ENCODE measurements at regions of chr2 and their contacts with region 1.

Region 1: DNA sequence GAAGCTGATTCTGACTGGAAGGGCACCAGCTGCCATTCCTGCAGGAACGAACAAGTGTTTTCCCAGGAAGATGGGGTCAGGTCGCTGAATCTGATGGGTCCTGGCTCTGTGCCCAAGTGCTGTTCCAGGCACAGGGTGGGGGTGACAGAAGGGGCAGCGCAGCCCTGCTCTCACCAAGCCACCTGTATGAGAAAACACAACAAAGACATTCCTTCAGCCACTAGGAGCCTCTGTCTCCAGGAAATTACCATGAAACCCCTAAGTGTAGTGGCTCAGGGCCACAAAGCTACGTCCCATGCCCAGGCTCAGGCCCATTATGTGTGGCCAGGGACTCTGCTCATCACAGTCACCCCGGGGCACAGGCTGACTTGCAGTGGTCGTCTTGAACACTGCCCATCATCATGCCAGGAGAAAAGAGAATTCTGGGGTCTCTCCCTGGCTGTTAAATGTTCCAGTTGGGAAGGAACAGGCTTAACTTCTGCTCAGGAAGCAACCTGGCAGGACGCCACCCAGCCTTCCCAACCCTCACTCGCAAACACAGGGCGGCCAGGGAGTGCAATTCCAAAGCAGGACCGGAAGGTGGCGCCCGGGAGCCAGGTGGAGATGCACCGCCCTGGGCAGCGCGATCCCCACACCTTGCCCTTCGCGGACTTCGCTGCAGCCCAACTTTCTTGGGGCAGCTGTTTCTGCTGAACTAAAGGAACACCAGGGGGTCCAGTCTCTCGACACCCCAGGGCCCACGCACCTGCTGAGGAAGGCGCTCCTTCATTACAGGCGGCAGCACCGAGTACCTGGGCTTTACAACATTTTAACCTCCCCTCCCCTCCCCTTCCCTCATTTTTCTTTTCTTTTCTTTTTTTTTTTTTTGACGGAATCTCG is 11.0 kb upstream of the SFTPB start:
- DNase-seq: peak; percentile 80 to 94
- ATAC-seq: peak; percentile 81 to 97
- H3K4me3 ChIP-seq: no peak overlapping the region
- H3K27ac ChIP-seq: peak overlapping the region; percentile 70 to 73
- H3K4me1 ChIP-seq: peaks cover 26% of the 10 kb centered on the region
- CTCF ChIP-seq: peak; percentile 94
- EP300 ChIP-seq: no peak
- POLR2A ChIP-seq: no peak
- RAD21 ChIP-seq: peak; percentile 91 to 97

Region 2: GRCh38 chr2:85175369-85176299 is 503.4 kb before region 1 on chr2:
- CTCF ChIA-PET with region 1: no interaction called
- POLR2A ChIA-PET with region 1: no interaction called
- DNase-seq: no peak
- ATAC-seq: no peak
- H3K4me3 ChIP-seq: no peak overlapping the region
- H3K27ac ChIP-seq: no peak overlapping the region
- H3K4me1 ChIP-seq: no peaks in the 10 kb centered on the region
- CTCF ChIP-seq: no peak
- EP300 ChIP-seq: no peak
- POLR2A ChIP-seq: no peak
- RAD21 ChIP-seq: no peak

Region 3: DNA sequence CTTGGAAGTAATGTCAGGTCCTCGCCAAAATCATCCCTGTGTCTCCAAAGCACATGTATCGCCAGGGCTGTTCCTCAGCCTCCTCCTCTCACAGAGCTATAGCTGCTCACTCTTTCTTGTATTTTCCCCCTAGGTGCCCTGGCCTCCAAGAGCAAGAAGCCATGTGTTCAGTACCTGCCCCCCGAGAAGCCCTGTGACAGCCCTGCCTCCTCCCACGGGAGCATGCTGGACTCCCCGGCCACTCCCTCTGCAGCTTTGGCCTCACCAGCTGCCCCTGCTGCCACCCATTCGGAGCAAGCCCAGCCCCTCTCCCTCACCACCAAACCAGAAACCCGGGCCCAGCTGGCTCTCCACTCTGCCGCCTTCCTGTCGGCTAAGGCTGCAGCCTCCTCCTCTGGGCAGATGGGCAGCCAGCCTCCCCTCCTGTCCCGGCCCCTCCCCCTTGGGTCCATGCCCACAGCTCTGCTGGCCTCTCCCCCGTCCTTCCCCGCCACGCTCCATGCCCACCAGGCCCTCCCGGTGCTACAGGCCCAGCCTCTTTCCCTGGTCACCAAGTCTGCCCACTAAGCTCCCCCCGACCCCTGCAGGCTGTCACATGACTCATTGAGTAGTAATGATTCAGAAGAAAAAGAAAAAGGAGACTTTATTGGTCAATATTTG is 370.0 kb before region 1 on chr2:
- CTCF ChIA-PET with region 1: no interaction called
- POLR2A ChIA-PET with region 1: no interaction called
- DNase-seq: no peak
- ATAC-seq: peak; percentile 21 to 35; a peak in 4 of 6 replicates
- H3K4me3 ChIP-seq: no peak overlapping the region
- H3K27ac ChIP-seq: peak overlapping the region in 1 of 2 experiments; percentile 2; a peak in 1 of 6 replicates
- H3K4me1 ChIP-seq: peaks cover 5% of the 10 kb centered on the region; the same call in 1 of the 3 replicates
- CTCF ChIP-seq: no peak
- EP300 ChIP-seq: no peak
- POLR2A ChIP-seq: no peak
- RAD21 ChIP-seq: no peak

Region 4: DNA sequence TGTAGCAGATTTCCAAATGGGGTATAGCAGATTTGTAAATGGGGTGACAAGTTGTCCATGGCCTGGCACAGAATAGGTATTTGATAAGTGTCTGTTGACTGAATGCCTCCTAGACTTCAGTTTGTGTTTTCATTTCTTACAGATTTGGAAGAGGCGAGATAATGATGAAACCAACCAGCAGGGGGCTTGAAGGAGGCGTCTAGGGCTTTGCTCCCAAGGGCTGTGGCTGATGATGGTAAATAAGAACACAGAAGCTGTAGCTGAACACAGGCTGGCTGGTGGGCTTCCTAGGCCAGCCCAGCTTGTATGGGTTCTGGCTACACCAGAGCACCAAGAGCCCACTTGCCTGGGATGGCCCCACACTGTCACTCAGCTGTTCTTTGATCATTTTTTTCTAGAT is 30.4 kb before region 1 on chr2:
- CTCF ChIA-PET with region 1: interaction called, 37 read pairs
- POLR2A ChIA-PET with region 1: no interaction called
- DNase-seq: peak; percentile 72 to 76
- ATAC-seq: peak; percentile 72 to 84
- H3K4me3 ChIP-seq: no peak overlapping the region
- H3K27ac ChIP-seq: peak overlapping the region; percentile 80 to 91
- H3K4me1 ChIP-seq: peaks cover 59% of the 10 kb centered on the region
- CTCF ChIP-seq: peak; percentile 71
- EP300 ChIP-seq: no peak
- POLR2A ChIP-seq: no peak
- RAD21 ChIP-seq: peak; percentile 63 to 67

Region 5: GRCh38 chr2:85694052-85695025 is 15.3 kb after region 1 on chr2 and contains the start of gene GNLY:
- CTCF ChIA-PET with region 1: interaction called, 48 read pairs
- POLR2A ChIA-PET with region 1: no interaction called
- DNase-seq: no peak
- ATAC-seq: no peak; a peak in 1 of 6 replicates
- H3K4me3 ChIP-seq: no peak within 1 kb of the TSS
- H3K27ac ChIP-seq: peak within 1 kb of the TSS in 1 of 2 experiments; percentile 47; a peak in 3 of 6 replicates
- H3K4me1 ChIP-seq: peaks cover 7% of the 10 kb centered on the region; the same call in 1 of the 3 replicates
- CTCF ChIP-seq: no peak
- EP300 ChIP-seq: no peak
- POLR2A ChIP-seq: no peak
- RAD21 ChIP-seq: no peak
- polyA plus RNA-seq, gene GNLY: not detected in 2 replicates

Region 6: GRCh38 chr2:85712849-85713602 is 34.0 kb after region 1 on chr2:
- CTCF ChIA-PET with region 1: interaction called, 228 read pairs
- POLR2A ChIA-PET with region 1: no interaction called
- DNase-seq: peak in 1 of 2 experiments; percentile 54
- ATAC-seq: peak; percentile 35 to 43; a peak in 3 of 6 replicates
- H3K4me3 ChIP-seq: no peak overlapping the region
- H3K27ac ChIP-seq: peak overlapping the region; percentile 11 to 68; a peak in 2 of 6 replicates
- H3K4me1 ChIP-seq: peaks cover 16% of the 10 kb centered on the region; the same call in 2 of the 3 replicates
- CTCF ChIP-seq: no peak
- EP300 ChIP-seq: no peak
- POLR2A ChIP-seq: no peak
- RAD21 ChIP-seq: no peak

Region 7: DNA sequence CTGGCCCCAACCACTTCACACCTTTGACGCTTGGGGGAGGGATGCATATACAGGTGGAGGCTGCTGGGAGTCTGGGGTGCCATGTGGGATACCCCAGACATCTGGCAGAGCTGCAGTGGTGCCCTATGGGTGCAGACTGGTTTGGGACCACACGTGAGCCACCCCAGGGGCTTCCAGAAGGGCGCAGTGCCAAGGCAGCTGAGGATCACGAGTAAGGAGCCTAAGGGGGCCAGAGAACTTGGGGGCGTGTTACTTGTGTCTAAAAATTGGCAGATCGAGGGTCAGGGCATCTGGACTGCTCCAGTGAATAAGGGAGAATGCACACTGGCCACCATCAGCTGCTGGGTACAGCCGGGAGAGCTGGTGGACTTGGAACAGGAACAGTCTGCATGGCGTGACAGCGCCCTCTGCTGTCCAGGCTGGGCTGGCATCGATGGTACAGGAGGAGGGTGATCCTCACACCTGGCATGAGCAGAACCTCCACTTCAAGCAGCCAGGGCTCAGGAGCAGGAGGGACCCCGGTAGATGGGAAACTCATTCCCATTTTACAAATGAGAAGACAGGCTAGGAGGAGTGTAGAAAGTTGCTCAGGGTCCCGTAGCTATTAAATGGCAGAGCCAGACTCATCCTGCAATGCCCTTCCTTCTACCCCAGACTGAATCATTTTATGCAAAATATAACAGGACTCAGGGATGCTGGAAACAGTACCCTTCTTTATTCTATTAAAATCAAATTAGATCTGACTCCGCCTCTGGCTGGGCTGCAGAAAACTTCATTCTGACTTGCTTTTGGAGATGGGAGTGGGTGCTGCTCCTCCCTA is 135.2 kb after region 1 on chr2:
- CTCF ChIA-PET with region 1: interaction called, 25 read pairs
- POLR2A ChIA-PET with region 1: no interaction called
- DNase-seq: peak; percentile 91 to 93
- ATAC-seq: peak; percentile 97 to 99
- H3K4me3 ChIP-seq: no peak overlapping the region
- H3K27ac ChIP-seq: peak overlapping the region; percentile 52 to 71
- H3K4me1 ChIP-seq: peaks cover 24% of the 10 kb centered on the region
- CTCF ChIP-seq: peak; percentile 98
- EP300 ChIP-seq: no peak
- POLR2A ChIP-seq: no peak
- RAD21 ChIP-seq: peak; percentile 100